Common myeloid progenitor, CD34-positive (primary cell): ENCODE measurements at regions of chr3 and their contacts with region 1.

Region 1: DNA sequence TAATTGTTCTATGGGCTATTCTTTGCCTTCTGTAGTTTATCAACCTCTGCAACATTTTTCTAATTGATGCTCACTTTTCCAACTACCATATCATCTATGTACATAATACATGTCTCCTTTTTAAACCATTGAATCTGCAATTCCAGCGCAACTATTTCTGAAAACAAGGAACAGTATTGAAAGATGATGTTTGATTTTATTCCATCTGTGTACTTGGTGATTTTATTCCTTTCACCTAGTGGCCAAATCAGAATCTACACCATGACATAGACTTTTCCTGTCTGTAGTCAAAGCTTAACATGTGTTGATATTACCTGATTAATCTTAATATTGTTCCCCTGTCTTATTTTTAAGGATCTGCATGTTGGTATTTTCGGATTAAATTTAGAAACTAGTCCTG is 13.0 kb downstream of the NKTR start:
- DNase-seq: peak; percentile 46 to 73 (median 69)
- H3K4me3 ChIP-seq: no peak overlapping the region
- H3K27ac ChIP-seq: no peak overlapping the region
- H3K4me1 ChIP-seq: peaks cover 6 to 29% (median 20%) of the 10 kb centered on the region in 4 experiments
- H3K27me3 ChIP-seq: no peaks in the 10 kb centered on the region

Region 2: GRCh38 chr3:42590989-42591756 is 22.3 kb before region 1 on chr3:
- CTCF ChIA-PET with region 1: interaction called, 18 read pairs
- POLR2A ChIA-PET with region 1: no interaction called
- DNase-seq: no peak
- H3K4me3 ChIP-seq: peak overlapping the region; percentile 62 to 89 (median 75)
- H3K27ac ChIP-seq: peak overlapping the region; percentile 40 to 83
- H3K4me1 ChIP-seq: peaks cover 6 to 22% (median 13%) of the 10 kb centered on the region in 4 experiments
- H3K27me3 ChIP-seq: no peaks in the 10 kb centered on the region

Region 3: GRCh38 chr3:42600111-42600988 is 13.1 kb before region 1 on chr3 and contains the start of gene NKTR:
- CTCF ChIA-PET with region 1: interaction called, 50 read pairs
- POLR2A ChIA-PET with region 1: interaction called, 6 read pairs
- DNase-seq: peak; percentile 99 to 100 (median 100)
- H3K4me3 ChIP-seq: peak within 1 kb of the TSS; percentile 60 to 92 (median 84)
- H3K27ac ChIP-seq: peak within 1 kb of the TSS; percentile 93 to 94
- H3K4me1 ChIP-seq: peaks cover 6 to 20% (median 10%) of the 10 kb centered on the region in 4 experiments
- H3K27me3 ChIP-seq: no peaks in the 10 kb centered on the region

Region 4: DNA sequence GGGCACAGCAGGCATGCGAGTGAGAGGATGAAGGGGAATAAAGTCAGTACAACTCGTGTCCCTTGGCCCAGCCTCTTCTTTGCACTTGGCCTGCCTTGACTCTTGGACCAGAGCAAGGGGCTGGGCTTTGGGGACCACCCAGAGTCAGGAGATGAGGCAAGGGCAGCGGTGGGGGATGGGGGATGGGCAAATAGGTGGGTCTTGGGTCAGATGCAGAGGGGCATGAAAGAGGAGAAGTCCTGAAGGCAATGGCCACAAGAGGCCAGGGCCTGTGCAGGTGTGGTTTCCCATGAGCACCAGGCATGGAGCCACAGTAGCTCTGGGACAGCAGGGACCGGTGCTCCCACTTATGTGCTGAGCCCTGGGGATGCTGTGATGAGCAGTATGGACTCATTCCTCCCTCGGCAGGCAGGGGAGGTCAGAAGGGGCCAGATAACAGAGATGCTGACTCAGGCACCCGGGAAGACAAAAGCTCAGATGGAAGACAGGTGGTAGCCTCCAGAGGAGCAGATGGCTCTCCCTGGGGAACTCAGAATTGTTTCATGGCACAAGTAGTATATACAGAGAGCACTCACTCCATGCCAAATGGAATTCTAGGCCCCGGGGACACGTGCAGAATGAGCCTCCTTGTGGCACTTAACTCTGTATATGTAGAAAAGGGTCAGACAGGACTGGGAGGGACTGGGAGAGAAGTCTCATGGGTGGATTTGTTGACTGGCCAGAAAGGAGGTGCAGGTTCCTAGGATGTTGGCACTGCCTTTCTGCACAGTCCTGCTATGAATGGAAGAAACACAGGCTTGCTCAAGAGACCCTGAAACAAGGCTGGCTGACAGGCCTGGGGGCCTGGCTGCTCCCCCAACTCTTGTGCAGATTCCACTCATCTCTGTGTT is 54.3 kb after region 1 on chr3:
- CTCF ChIA-PET with region 1: no interaction called
- POLR2A ChIA-PET with region 1: no interaction called
- DNase-seq: no peak
- H3K4me3 ChIP-seq: no peak overlapping the region
- H3K27ac ChIP-seq: no peak overlapping the region
- H3K4me1 ChIP-seq: no peaks in the 10 kb centered on the region
- H3K27me3 ChIP-seq: peaks cover 0 to 8% (median 3%) of the 10 kb centered on the region in 5 experiments

Region 5: GRCh38 chr3:42712688-42713372 is 99.4 kb after region 1 on chr3:
- CTCF ChIA-PET with region 1: no interaction called
- POLR2A ChIA-PET with region 1: no interaction called
- DNase-seq: no peak
- H3K4me3 ChIP-seq: no peak overlapping the region
- H3K27ac ChIP-seq: no peak overlapping the region
- H3K4me1 ChIP-seq: no peaks in the 10 kb centered on the region
- H3K27me3 ChIP-seq: no peaks in the 10 kb centered on the region